MCF 10A (cell line): ENCODE measurements at regions of chr10 and their contacts with region 1.

Region 1: GRCh38 chr10:11611248-11612020 is at the start of gene USP6NL:
- DNase-seq: peak; percentile 86
- H3K4me3 Mint-ChIP-seq: peak within 1 kb of the TSS; percentile 92
- H3K27ac Mint-ChIP-seq: peak within 1 kb of the TSS; percentile 59
- H3K4me1 Mint-ChIP-seq: peaks cover 21% of the 10 kb centered on the region
- H3K27me3 Mint-ChIP-seq: no peaks in the 10 kb centered on the region
- CTCF ChIP-seq: no peak
- total RNA-seq, gene USP6NL: 19.0 and 19.2 TPM in 2 replicates

Region 2: DNA sequence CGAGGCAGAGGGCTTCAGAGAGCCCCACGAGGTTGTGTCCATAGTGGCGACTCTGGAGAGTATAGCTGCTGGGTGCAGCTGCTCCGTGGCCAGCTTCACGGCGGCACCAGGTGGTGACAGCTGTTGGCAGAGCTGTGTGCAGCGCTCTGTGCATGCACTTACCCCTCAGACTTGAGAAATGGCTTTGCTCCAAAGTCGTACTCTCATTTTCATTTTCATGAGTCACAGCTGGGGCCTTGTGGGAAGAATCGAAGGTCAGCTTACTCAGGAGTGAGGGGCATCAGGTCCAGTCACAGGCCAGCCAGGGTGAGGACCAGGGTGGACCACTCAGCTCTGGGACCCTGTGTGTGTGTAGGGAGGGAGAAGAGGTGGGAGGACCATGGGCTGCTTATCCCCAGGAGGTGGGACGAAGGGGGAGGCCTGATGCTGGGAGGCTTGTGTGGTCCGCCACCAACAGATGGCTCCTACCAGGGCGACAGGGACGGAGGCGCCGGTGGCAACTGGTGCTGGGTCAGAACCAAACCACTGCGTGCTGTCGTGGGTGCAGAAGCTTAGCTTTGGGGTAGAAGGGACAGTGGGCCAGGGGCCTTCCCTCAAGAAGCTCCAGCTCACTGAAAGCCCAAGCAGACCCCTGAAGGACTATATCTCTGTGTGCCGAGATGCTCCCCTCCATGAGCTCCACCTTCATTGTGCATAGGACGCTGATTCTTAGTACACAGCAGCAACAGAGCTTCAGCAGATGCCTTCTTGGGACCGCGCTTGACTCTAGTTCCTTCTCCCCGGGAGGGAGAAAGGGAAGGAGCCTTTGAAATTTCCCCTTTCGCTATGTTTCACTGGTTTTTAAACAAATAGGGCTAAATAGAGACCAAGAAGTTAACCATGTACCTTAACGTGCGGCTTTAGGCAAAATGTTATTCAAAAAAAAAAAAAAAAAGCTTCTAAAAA is 368.7 kb before region 1 on chr10:
- CTCF ChIA-PET with region 1: no interaction called
- POLR2A ChIA-PET with region 1: no interaction called
- intact Hi-C with region 1: no loop called
- DNase-seq: peak; percentile 7
- H3K4me3 Mint-ChIP-seq: no peak overlapping the region
- H3K27ac Mint-ChIP-seq: no peak overlapping the region
- H3K4me1 Mint-ChIP-seq: no peaks in the 10 kb centered on the region
- H3K27me3 Mint-ChIP-seq: peaks cover 3% of the 10 kb centered on the region
- CTCF ChIP-seq: no peak

Region 3: DNA sequence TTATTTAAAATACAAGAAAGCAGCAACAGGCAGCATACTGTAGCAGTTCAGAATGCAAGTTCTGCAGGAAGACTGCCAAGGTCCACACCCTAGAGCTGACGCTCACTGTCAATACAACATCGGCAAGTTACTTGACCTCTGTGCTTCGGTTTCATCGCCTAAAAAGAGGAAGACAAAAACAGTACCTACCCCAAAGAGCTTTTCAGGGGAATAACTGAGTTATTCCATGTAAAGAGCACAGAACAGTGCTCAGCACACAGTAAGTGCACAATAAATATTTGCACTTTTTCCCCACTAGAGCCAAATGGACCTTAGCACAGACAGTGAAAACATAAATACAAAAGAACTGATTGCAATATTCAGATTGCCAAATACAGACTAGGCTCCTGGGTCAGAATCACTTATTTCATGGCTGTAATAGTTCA is 88.6 kb before region 1 on chr10:
- CTCF ChIA-PET with region 1: interaction called, 3 read pairs
- POLR2A ChIA-PET with region 1: interaction called, 13 read pairs
- intact Hi-C with region 1: loop called (anchors 2 kb)
- DNase-seq: peak; percentile 45
- H3K4me3 Mint-ChIP-seq: no peak overlapping the region
- H3K27ac Mint-ChIP-seq: no peak overlapping the region
- H3K4me1 Mint-ChIP-seq: peaks cover 13% of the 10 kb centered on the region
- H3K27me3 Mint-ChIP-seq: no peaks in the 10 kb centered on the region
- CTCF ChIP-seq: no peak

Region 4: DNA sequence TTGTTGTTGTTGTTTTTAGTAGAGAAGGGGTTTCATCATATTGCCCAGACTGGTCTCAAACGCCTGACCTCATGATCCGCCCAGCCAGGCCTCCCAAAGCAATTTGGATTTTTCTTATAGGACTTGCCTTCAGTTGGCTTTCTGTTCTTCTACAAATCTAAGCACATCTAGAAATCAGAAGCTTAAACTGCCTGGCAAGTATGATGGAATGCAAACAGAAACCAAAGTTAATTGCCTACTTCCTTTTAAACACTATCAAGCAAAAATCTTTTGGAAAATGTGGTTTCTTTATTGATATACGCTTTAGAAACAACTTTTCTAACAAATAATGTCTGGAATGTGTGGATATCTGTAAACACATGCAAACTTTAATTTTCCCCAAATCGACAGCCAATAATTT is 64.9 kb before region 1 on chr10:
- CTCF ChIA-PET with region 1: no interaction called
- POLR2A ChIA-PET with region 1: interaction called, 10 read pairs
- intact Hi-C with region 1: no loop called
- DNase-seq: no peak
- H3K4me3 Mint-ChIP-seq: no peak overlapping the region
- H3K27ac Mint-ChIP-seq: no peak overlapping the region
- H3K4me1 Mint-ChIP-seq: peaks cover 7% of the 10 kb centered on the region
- H3K27me3 Mint-ChIP-seq: no peaks in the 10 kb centered on the region
- CTCF ChIP-seq: no peak

Region 5: DNA sequence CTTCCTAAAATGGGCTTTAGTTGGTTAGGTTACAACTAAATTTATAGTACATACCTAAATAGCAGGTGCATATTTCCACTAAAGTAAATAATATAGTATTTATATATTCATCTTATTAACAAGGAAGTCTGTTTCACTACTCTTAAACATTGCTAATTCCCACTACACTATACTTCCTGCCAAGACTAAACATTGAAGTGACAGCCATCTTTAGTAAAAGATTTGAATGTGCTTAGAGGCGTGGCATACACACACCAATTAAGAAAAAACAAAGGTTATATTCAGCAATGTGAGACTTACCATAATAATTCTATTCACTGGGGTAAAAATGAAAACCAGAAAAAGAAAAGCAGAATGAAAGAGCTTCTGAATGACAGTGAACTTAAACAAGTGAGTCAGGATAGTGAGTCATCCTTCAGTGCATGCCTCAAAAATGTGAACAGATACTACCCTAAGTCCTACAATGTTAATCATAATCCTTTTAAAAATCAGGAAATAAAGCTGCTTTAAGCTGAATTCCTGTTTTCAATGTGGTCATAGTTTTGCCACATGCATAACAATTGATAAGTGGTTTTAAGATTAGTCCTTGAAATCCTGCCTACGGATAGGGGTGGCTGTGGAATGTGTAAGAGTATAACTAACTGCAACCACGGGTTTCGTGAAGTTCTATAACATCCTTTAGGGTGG is 59.4 kb before region 1 on chr10:
- CTCF ChIA-PET with region 1: interaction called, 4 read pairs
- POLR2A ChIA-PET with region 1: interaction called, 10 read pairs
- intact Hi-C with region 1: no loop called
- DNase-seq: peak; percentile 76
- H3K4me3 Mint-ChIP-seq: peak overlapping the region; percentile 35
- H3K27ac Mint-ChIP-seq: peak overlapping the region; percentile 36
- H3K4me1 Mint-ChIP-seq: peaks cover 15% of the 10 kb centered on the region
- H3K27me3 Mint-ChIP-seq: no peaks in the 10 kb centered on the region
- CTCF ChIP-seq: no peak

Region 6: GRCh38 chr10:11684717-11685645 is 73.5 kb after region 1 on chr10:
- CTCF ChIA-PET with region 1: no interaction called
- POLR2A ChIA-PET with region 1: interaction called, 3 read pairs
- intact Hi-C with region 1: loop called (anchors 2 kb)
- DNase-seq: peak; percentile 91
- H3K4me3 Mint-ChIP-seq: peak overlapping the region; percentile 74
- H3K27ac Mint-ChIP-seq: peak overlapping the region; percentile 87
- H3K4me1 Mint-ChIP-seq: peaks cover 15% of the 10 kb centered on the region
- H3K27me3 Mint-ChIP-seq: peaks cover 18% of the 10 kb centered on the region
- CTCF ChIP-seq: no peak

Region 7: DNA sequence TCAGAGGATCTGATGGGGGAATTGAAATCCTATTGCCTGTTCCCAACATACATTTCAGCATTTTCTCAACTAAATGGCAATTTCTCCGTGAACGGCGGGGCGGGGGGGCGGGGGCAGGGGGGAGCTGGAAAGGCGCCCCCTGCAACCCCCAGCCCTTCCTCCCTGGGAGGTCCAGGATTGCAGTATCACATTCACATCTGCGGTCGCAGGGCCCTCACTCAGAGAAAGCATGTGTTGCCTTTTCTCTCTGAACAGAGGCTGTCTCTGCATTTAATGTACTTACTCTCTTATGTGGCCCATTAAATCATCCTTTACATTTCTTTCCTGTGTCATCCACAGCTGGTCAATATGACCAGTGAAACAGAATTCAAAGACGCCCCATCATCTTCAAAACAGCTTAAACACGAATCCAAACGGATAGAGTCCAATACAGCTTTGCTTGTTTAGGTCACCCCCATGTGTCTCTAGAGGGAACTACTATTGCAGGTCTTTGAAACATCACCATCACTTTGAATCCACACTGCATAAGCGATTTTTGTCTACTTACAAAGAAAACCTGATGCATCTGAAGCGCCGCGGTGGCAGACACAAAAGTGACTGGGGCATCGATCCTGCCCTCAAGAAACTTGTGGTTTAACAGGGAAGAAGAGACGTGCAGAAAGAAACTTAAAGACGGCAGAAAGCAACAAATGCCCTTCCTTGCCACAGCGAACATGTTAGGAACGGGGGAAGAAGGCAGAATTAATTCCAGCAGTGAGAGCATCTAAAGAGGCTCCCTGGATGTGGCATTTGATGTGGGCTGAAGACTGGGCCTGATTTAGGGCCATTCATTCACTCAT is 113.7 kb after region 1 on chr10:
- CTCF ChIA-PET with region 1: no interaction called
- POLR2A ChIA-PET with region 1: no interaction called
- intact Hi-C with region 1: loop called (anchors 1 kb)
- DNase-seq: peak; percentile 72
- H3K4me3 Mint-ChIP-seq: no peak overlapping the region
- H3K27ac Mint-ChIP-seq: no peak overlapping the region
- H3K4me1 Mint-ChIP-seq: peaks cover 6% of the 10 kb centered on the region
- H3K27me3 Mint-ChIP-seq: peaks cover 17% of the 10 kb centered on the region
- CTCF ChIP-seq: peak; percentile 79

Region 8: GRCh38 chr10:11757821-11758463 is 146.5 kb after region 1 on chr10:
- CTCF ChIA-PET with region 1: interaction called, 3 read pairs
- POLR2A ChIA-PET with region 1: interaction called, 8 read pairs
- intact Hi-C with region 1: loop called (anchors 1 kb)
- DNase-seq: peak; percentile 85
- H3K4me3 Mint-ChIP-seq: no peak overlapping the region
- H3K27ac Mint-ChIP-seq: peak overlapping the region; percentile 80
- H3K4me1 Mint-ChIP-seq: peaks cover 9% of the 10 kb centered on the region
- H3K27me3 Mint-ChIP-seq: no peaks in the 10 kb centered on the region
- CTCF ChIP-seq: peak; percentile 90